ENCODE measurements at regions of chr4 and their contacts with region 1.

Region 1: DNA sequence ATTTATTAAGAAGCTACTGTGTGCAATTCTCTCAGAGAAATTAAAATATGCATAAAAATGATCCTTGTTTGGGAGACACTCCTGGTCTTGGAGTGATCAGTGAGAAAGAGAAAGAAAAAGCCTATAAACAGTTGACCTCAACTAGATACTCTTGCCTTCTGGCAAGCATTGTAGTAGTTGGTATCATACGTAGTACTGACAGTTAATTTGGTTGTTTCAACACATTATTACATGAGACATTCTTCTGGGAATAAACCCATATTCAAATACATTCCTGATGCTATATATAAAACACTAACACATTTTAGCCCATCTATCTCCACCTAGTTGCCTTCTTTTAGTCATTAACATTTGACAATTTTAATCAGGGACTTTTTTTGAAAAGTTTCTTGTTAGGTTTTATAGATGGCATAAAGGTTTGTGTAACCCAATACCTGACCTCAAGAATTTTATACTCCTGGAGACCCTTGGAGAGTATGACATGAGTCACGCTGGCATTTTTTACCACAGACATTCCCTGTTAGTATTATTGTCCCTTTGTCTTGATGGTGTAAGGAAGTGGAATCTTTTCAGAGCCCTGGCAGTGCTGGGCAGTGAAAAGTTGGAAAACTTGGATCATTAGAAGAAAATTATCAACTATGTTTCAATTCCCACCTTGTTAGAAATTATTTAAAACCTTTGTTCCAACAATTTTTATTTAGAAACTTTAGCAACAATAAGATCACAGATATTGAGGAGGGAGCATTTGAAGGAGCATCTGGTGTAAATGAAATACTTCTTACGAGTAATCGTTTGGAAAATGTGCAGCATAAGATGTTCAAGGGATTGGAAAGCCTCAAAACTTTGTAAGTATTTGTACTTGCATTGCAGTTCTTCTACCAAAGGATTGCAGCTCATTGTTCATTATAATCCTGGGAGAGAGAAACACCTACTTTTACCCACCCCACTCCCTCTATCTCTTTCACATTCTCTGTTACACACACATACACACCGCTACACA is 167.1 kb upstream of the PACRGL start:
- DNase-seq: no peak
- ATAC-seq: no peak
- H3K4me3 ChIP-seq: no peak overlapping the region
- H3K27ac ChIP-seq: no peak overlapping the region
- H3K4me1 ChIP-seq: no peaks in the 10 kb centered on the region
- H3K27me3 ChIP-seq: no peaks in the 10 kb centered on the region
- CTCF ChIP-seq: no peak
- POLR2A ChIP-seq: no peak

Region 2: DNA sequence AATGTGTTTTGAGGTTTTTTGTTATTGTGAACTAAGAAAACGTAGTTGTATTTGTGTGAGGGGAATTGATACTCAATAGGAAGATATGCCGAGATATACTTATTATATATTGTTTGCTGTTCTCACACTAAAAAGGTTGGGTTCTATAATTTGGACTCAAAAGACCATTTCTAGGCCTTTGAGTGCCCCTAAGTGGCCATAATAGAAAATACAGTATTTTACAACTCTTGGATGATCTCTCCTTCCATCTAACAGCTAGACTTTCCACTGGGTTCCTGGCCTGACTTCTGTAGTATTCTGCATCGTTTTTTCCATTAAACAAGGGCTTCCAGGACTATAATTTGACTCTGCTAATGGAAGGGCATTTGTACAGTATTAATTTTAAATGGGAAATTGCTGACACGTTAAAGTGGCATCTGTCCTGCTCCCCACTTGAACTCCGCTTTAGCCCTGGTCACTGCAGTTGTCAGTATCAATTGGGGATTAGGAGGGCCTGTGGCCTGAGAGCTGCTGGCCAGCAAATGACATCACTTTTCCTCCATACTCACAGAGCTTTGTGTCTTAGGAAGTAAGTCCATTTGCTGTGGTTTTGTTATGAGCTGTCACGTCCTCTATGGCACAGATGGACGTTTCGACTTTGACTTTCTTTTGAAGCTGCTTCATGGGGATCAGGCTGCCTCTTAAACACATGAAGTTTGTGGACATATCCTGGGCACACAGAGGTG is 104.6 kb before region 1 on chr4:
- intact Hi-C with region 1: loop called in 1 of 10 experiments (anchors 10 kb)
- DNase-seq: no peak
- ATAC-seq: peak in 1 of 4 donors; percentile 23
- H3K4me3 ChIP-seq: no peak overlapping the region
- H3K27ac ChIP-seq: no peak overlapping the region
- H3K4me1 ChIP-seq: peaks cover 0 to 4% (median 0%) of the 10 kb centered on the region in 12 donors
- H3K27me3 ChIP-seq: no peaks in the 10 kb centered on the region
- CTCF ChIP-seq: peak in 6 of 12 donors; percentile 11 to 40 (median 28)
- POLR2A ChIP-seq: no peak

Region 3: DNA sequence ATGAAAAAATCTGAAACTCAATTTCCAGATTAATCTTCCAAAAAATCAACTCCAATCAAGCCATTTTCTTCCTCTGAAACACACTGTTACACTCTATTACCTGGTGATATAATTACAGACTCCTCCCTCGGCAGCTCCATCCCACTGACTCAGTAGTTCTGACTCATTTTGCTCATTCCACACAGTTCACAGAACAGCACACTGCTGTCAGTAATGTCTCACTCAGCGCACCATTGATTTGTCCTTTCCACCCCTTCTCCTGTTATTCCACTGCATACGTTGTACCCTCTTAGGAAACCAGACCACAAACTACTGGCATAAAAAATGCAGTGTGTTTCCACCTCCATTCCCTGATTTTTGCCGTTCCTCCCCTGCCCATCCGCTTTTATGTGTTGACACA is 68.8 kb before region 1 on chr4:
- intact Hi-C with region 1: no loop called
- DNase-seq: no peak
- ATAC-seq: no peak
- H3K4me3 ChIP-seq: no peak overlapping the region
- H3K27ac ChIP-seq: no peak overlapping the region
- H3K4me1 ChIP-seq: no peaks in the 10 kb centered on the region
- H3K27me3 ChIP-seq: no peaks in the 10 kb centered on the region
- CTCF ChIP-seq: no peak
- POLR2A ChIP-seq: no peak

Region 4: GRCh38 chr4:20652231-20652885 is 119.2 kb after region 1 on chr4:
- intact Hi-C with region 1: no loop called
- DNase-seq: no peak
- ATAC-seq: no peak
- H3K4me3 ChIP-seq: no peak overlapping the region
- H3K27ac ChIP-seq: no peak overlapping the region
- H3K4me1 ChIP-seq: no peaks in the 10 kb centered on the region
- H3K27me3 ChIP-seq: no peaks in the 10 kb centered on the region
- CTCF ChIP-seq: no peak
- POLR2A ChIP-seq: no peak

Measured in heart left ventricle (tissue), 16 donors.